Activated T-helper 1 cell treated with anti-CD3 and anti-CD28 coated beads, Interleukin-12 subunit alpha, Interleukin-12 subunit beta, Interleukin-2, Interleukin-4 antibody, amounts not matched to agents 30 ng/mL and 10 ng/mL and 1 ng/mL, durations not matched to agents 14 hours and 24 hours and 36 hours (primary cell): ENCODE measurements at regions of chr1 and their contacts with region 1.

Region 1: DNA sequence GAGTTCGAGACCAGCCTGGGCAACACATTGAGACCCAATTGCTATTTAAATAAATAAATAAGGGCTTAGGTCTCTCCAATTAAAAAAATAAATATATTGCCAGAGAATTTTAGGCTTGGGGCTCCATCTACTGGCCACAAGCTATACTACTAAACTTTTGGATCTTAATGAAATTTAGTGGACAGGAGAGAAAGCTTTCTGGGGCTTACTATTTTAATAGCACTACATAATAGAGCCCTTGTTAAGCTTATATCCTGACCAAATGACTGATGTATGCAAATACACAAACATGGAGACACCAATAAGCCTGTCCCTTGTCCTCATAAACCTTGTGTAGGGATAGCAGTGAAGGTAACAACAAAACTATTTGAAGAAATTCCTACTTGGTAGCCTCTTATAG is 18.4 kb downstream of the CCT3 start:
- DNase-seq: no peak
- H3K4me3 Mint-ChIP-seq: no peak overlapping the region
- H3K27ac Mint-ChIP-seq: no peak overlapping the region
- H3K4me1 Mint-ChIP-seq: no peaks in the 10 kb centered on the region
- H3K27me3 Mint-ChIP-seq: no peaks in the 10 kb centered on the region

Region 2: DNA sequence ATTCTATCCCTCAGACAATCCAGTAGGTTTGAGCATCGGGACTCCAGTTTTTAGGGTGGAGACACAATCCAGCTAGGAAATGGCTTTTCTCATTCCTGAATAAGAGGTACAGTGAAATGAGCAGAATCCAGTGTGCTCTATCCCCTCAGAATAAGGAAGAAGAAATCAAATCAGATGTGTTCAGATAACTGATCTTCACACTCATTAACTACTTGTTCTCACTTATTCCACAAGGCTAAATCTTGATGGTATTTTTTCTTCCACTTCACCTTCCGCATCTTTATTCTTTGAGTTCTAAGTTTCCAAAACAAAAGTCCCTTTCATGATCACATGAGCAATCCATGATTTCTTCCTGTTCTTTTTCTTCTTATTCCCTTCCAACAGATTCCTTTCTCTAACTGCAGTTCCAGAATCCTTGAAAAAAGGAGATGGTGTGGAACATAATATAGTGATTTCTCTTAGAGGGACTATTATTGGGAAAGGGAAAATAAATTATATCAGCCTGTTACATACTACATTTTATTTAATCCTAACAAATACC is 458.6 kb before region 1 on chr1:
- intact Hi-C with region 1: no loop called
- DNase-seq: no peak
- H3K4me3 Mint-ChIP-seq: peak overlapping the region; percentile 89
- H3K27ac Mint-ChIP-seq: peak overlapping the region; percentile 98
- H3K4me1 Mint-ChIP-seq: peaks cover 40% of the 10 kb centered on the region
- H3K27me3 Mint-ChIP-seq: no peaks in the 10 kb centered on the region

Region 3: DNA sequence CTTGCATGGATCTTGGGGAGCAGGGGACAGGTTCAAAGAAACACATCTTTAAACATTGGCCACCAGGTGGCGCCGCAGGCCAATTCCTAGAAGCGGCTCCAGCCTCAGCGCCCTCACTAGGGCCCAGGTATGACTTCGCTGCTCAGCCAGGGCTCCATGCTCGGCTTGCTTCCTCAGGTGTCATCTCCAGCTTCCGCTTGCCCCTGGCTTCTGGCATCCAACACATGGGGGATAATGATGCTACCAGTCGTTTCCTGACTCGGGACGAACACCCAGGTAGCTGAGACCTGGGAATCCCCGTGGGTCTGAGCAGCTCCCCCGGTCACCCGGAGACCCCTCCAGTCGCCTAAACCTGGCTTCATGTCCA is 228.9 kb before region 1 on chr1:
- intact Hi-C with region 1: loop called (anchors 1 kb)
- DNase-seq: peak; percentile 76
- H3K4me3 Mint-ChIP-seq: no peak overlapping the region
- H3K27ac Mint-ChIP-seq: no peak overlapping the region
- H3K4me1 Mint-ChIP-seq: peaks cover 3% of the 10 kb centered on the region
- H3K27me3 Mint-ChIP-seq: peaks cover 39% of the 10 kb centered on the region

Region 4: GRCh38 chr1:156146020-156146768 is 173.5 kb before region 1 on chr1:
- intact Hi-C with region 1: loop called (anchors 2 kb)
- DNase-seq: peak; percentile 35
- H3K4me3 Mint-ChIP-seq: peak overlapping the region; percentile 64
- H3K27ac Mint-ChIP-seq: peak overlapping the region; percentile 90
- H3K4me1 Mint-ChIP-seq: peaks cover 43% of the 10 kb centered on the region
- H3K27me3 Mint-ChIP-seq: no peaks in the 10 kb centered on the region

Region 5: GRCh38 chr1:156510709-156511108 is 191.0 kb after region 1 on chr1:
- intact Hi-C with region 1: no loop called
- DNase-seq: no peak
- H3K4me3 Mint-ChIP-seq: no peak overlapping the region
- H3K27ac Mint-ChIP-seq: no peak overlapping the region
- H3K4me1 Mint-ChIP-seq: peaks cover 35% of the 10 kb centered on the region
- H3K27me3 Mint-ChIP-seq: no peaks in the 10 kb centered on the region

Region 6: DNA sequence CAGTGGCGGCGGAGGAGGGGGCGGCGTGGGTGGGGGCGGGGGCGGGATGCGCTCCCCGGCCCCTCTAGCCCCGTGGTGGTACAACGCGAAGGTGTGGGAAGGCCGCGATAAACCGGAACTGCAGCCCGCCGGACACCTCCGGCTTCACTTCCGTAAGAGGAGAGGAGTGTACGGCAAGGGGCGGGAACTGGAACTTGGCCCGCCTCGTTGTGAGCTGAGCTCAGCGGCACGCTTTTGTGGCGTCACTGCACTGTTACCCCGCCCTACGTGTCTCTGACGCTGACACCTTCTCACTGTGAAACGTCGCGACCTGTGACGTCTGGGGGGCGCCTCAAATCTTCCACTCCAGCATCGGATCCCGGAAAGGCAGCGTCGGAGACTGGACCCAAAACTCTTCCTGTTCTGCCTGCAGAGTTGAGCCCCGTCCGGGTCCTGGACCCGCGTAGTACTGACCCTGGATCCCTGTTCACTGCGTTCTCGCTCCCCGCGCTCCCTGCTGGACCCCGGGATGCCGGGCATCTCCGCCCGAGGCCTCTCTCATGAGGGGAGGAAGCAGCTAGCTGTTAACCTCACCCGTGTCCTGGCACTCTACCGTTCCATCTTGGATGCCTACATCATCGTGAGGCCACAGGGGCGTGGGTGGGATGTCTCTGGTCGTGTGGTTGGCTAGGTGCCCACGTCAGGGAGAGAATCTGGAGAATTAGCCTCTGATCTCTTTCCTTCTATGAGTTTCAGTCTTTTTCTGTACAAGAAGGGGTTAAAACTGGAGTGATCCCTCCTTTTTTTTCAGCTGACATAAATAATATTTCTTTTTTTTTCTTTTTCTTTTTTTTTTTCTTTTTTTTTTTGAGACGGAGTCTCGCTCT is 409.2 kb after region 1 on chr1 and contains the start of gene ISG20L2:
- intact Hi-C with region 1: no loop called
- DNase-seq: peak; percentile 96
- H3K4me3 Mint-ChIP-seq: no peak within 1 kb of the TSS
- H3K27ac Mint-ChIP-seq: no peak within 1 kb of the TSS
- H3K4me1 Mint-ChIP-seq: peaks cover 30% of the 10 kb centered on the region
- H3K27me3 Mint-ChIP-seq: no peaks in the 10 kb centered on the region
- total RNA-seq, gene ISG20L2: 73.7 and 81.5 TPM in 2 replicates